ENCODE measurements at regions of chr14 and their contacts with region 1.

Region 1: GRCh38 chr14:67837011-67837624 is 17.5 kb downstream of the RAD51B start:
- DNase-seq: peak; percentile 88
- ATAC-seq: peak; percentile 86
- H3K4me3 ChIP-seq: no peak overlapping the region
- H3K27ac ChIP-seq: no peak overlapping the region
- H3K4me1 ChIP-seq: no peaks in the 10 kb centered on the region
- H3K27me3 ChIP-seq: no peaks in the 10 kb centered on the region
- CTCF ChIP-seq: peak; percentile 80
- POLR2A ChIP-seq: no peak
- RAD21 ChIP-seq: peak; percentile 78

Region 2: GRCh38 chr14:67883717-67884116 is 46.6 kb after region 1 on chr14:
- CTCF ChIA-PET with region 1: no interaction called
- POLR2A ChIA-PET with region 1: no interaction called
- dilution Hi-C with region 1: no loop called
- in situ Hi-C with region 1: no loop called
- intact Hi-C with region 1: no loop called
- DNase-seq: peak; percentile 28
- ATAC-seq: no peak
- H3K4me3 ChIP-seq: no peak overlapping the region
- H3K27ac ChIP-seq: no peak overlapping the region
- H3K4me1 ChIP-seq: no peaks in the 10 kb centered on the region
- H3K27me3 ChIP-seq: no peaks in the 10 kb centered on the region
- CTCF ChIP-seq: peak; percentile 53
- POLR2A ChIP-seq: no peak
- RAD21 ChIP-seq: peak; percentile 51

Region 3: GRCh38 chr14:67919259-67920032 is 82.3 kb after region 1 on chr14:
- CTCF ChIA-PET with region 1: no interaction called
- POLR2A ChIA-PET with region 1: no interaction called
- dilution Hi-C with region 1: no loop called
- in situ Hi-C with region 1: no loop called
- intact Hi-C with region 1: loop called (anchors 5 kb)
- DNase-seq: peak; percentile 21
- ATAC-seq: peak; percentile 75
- H3K4me3 ChIP-seq: no peak overlapping the region
- H3K27ac ChIP-seq: no peak overlapping the region
- H3K4me1 ChIP-seq: peaks cover 4% of the 10 kb centered on the region; the same call in 1 of the 2 replicates
- H3K27me3 ChIP-seq: no peaks in the 10 kb centered on the region
- CTCF ChIP-seq: no peak
- POLR2A ChIP-seq: no peak
- RAD21 ChIP-seq: no peak

Region 4: DNA sequence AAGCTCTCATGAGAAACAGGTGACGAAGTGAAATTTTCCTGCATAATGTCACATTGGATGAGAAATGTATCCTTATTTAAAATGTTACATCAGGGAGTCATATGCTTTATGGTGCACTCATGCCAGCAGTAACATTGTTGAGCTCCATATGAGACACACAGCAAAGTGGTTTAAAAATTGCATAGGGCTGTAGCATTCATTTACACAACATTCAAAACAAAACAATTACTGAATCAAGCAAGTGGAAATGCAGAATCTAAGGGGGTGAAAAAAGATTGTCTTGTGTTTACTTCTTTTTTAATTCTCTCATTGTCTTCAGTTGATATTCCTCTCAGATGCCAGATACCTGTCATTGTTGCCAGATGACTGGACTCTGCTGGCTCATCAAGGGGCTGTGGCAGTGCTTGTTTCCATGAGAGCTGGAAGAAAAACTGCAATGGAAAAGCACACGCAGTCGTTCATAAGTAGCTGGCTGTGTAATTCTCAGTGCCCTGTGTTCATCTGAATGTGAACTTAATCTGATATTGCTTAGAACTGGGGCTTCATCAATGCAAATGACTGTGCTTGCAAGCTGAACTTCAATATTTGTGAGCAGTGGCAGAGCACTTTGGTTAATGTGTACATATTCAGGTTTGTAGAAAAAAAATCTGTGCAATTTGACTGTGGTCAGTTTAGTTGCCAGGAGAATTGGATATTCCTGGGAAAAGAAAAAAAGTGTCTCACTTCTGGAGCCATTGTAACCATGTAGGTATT is 288.0 kb after region 1 on chr14:
- CTCF ChIA-PET with region 1: no interaction called
- POLR2A ChIA-PET with region 1: no interaction called
- dilution Hi-C with region 1: no loop called
- in situ Hi-C with region 1: no loop called
- intact Hi-C with region 1: no loop called
- DNase-seq: peak; percentile 75
- ATAC-seq: peak; percentile 61
- H3K4me3 ChIP-seq: no peak overlapping the region
- H3K27ac ChIP-seq: no peak overlapping the region
- H3K4me1 ChIP-seq: peaks cover 4% of the 10 kb centered on the region; the same call in 1 of the 2 replicates
- H3K27me3 ChIP-seq: no peaks in the 10 kb centered on the region
- CTCF ChIP-seq: no peak
- POLR2A ChIP-seq: no peak
- RAD21 ChIP-seq: no peak

Region 5: GRCh38 chr14:68843471-68844209 is 1006.5 kb after region 1 on chr14:
- CTCF ChIA-PET with region 1: interaction called, 4 read pairs
- POLR2A ChIA-PET with region 1: no interaction called
- dilution Hi-C with region 1: no loop called
- in situ Hi-C with region 1: no loop called
- intact Hi-C with region 1: loop called (anchors 1 kb)
- DNase-seq: peak; percentile 57
- ATAC-seq: peak; percentile 77
- H3K4me3 ChIP-seq: no peak overlapping the region
- H3K27ac ChIP-seq: no peak overlapping the region
- H3K4me1 ChIP-seq: peaks cover 15% of the 10 kb centered on the region; the same call in 1 of the 2 replicates
- H3K27me3 ChIP-seq: no peaks in the 10 kb centered on the region
- CTCF ChIP-seq: peak; percentile 81
- POLR2A ChIP-seq: 0 out of 2 replicates have a peak, but pooled peaks have one; percentile 47
- RAD21 ChIP-seq: peak; percentile 66